CD8-positive, alpha-beta T cell (primary cell): ENCODE measurements at regions of chr18 and their contacts with region 1.

Region 1: GRCh38 chr18:13629841-13630715 is 96.3 kb downstream of the FAM210A start:
- DNase-seq: peak in 7 of 9 experiments; percentile 28 to 77 (median 62)
- ATAC-seq: peak; percentile 95
- H3K4me3 ChIP-seq: no peak overlapping the region
- H3K4me3 Mint-ChIP-seq: no peak overlapping the region
- H3K27ac ChIP-seq: no peak overlapping the region
- H3K27ac Mint-ChIP-seq: no peak overlapping the region
- H3K4me1 ChIP-seq: peaks cover 4% of the 10 kb centered on the region
- H3K4me1 Mint-ChIP-seq: peaks cover 22% of the 10 kb centered on the region
- H3K27me3 ChIP-seq: no peaks in the 10 kb centered on the region
- H3K27me3 Mint-ChIP-seq: no peaks in the 10 kb centered on the region
- CTCF ChIP-seq: peak; percentile 95

Region 2: GRCh38 chr18:13006531-13007247 is 623.4 kb before region 1 on chr18:
- CTCF ChIA-PET with region 1: no interaction called
- POLR2A ChIA-PET with region 1: no interaction called
- intact Hi-C with region 1: loop called in 1 of 2 experiments (anchors 5 kb)
- DNase-seq: no peak
- ATAC-seq: no peak
- H3K4me3 ChIP-seq: no peak overlapping the region
- H3K4me3 Mint-ChIP-seq: no peak overlapping the region
- H3K27ac ChIP-seq: no peak overlapping the region
- H3K27ac Mint-ChIP-seq: peak overlapping the region; percentile 20
- H3K4me1 ChIP-seq: no peaks in the 10 kb centered on the region
- H3K4me1 Mint-ChIP-seq: peaks cover 11% of the 10 kb centered on the region
- H3K27me3 ChIP-seq: no peaks in the 10 kb centered on the region
- H3K27me3 Mint-ChIP-seq: no peaks in the 10 kb centered on the region
- CTCF ChIP-seq: no peak

Region 3: GRCh38 chr18:13159579-13159978 is 470.5 kb before region 1 on chr18:
- CTCF ChIA-PET with region 1: interaction called, 5 read pairs
- POLR2A ChIA-PET with region 1: no interaction called
- intact Hi-C with region 1: loop called in 1 of 2 experiments (anchors 1 kb)
- DNase-seq: peak in 4 of 9 experiments; percentile 9 to 77 (median 57)
- ATAC-seq: peak; percentile 86
- H3K4me3 ChIP-seq: no peak overlapping the region
- H3K4me3 Mint-ChIP-seq: peak overlapping the region; percentile 20
- H3K27ac ChIP-seq: no peak overlapping the region
- H3K27ac Mint-ChIP-seq: no peak overlapping the region
- H3K4me1 ChIP-seq: no peaks in the 10 kb centered on the region
- H3K4me1 Mint-ChIP-seq: peaks cover 3% of the 10 kb centered on the region
- H3K27me3 ChIP-seq: peaks cover 0 to 2% of the 10 kb centered on the region in 2 experiments
- H3K27me3 Mint-ChIP-seq: no peaks in the 10 kb centered on the region
- CTCF ChIP-seq: peak; percentile 93

Region 4: DNA sequence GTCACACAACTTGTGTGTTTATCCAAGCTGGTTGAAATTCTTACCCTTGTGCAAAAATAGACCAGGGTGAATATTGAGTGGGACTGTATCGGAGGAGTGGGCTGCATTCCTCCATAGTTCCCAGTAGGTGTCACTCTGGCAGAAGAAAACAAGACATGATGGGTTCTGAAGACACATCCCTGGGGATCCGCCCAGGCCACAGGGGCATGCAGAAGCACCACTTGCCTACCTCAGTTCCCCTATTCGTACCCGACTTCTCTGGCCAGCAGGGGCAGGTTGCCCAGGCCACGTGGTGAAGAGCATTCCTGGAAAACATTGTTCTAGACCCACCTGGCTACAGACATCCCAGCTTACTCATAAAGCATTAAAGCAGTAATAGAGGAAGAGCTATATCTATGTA is 72.0 kb before region 1 on chr18:
- CTCF ChIA-PET with region 1: interaction called, 37 read pairs
- POLR2A ChIA-PET with region 1: no interaction called
- intact Hi-C with region 1: loop called (anchors 1 kb)
- DNase-seq: peak in 7 of 9 experiments; percentile 18 to 60 (median 39)
- ATAC-seq: peak; percentile 54
- H3K4me3 ChIP-seq: no peak overlapping the region
- H3K4me3 Mint-ChIP-seq: no peak overlapping the region
- H3K27ac ChIP-seq: no peak overlapping the region
- H3K27ac Mint-ChIP-seq: no peak overlapping the region
- H3K4me1 ChIP-seq: peaks cover 7% of the 10 kb centered on the region
- H3K4me1 Mint-ChIP-seq: peaks cover 18% of the 10 kb centered on the region
- H3K27me3 ChIP-seq: no peaks in the 10 kb centered on the region
- H3K27me3 Mint-ChIP-seq: no peaks in the 10 kb centered on the region
- CTCF ChIP-seq: peak; percentile 68